HEK293 (cell line): ENCODE measurements at regions of chr12 and their contacts with region 1.

Region 1: GRCh38 chr12:103548622-103549601 is 38.2 kb upstream of the STAB2 start:
- H3K4me3 ChIP-seq: no peak overlapping the region
- H3K27ac ChIP-seq: no peak overlapping the region
- H3K4me1 ChIP-seq: no peaks in the 10 kb centered on the region
- CTCF ChIP-seq: peak; percentile 62

Region 2: DNA sequence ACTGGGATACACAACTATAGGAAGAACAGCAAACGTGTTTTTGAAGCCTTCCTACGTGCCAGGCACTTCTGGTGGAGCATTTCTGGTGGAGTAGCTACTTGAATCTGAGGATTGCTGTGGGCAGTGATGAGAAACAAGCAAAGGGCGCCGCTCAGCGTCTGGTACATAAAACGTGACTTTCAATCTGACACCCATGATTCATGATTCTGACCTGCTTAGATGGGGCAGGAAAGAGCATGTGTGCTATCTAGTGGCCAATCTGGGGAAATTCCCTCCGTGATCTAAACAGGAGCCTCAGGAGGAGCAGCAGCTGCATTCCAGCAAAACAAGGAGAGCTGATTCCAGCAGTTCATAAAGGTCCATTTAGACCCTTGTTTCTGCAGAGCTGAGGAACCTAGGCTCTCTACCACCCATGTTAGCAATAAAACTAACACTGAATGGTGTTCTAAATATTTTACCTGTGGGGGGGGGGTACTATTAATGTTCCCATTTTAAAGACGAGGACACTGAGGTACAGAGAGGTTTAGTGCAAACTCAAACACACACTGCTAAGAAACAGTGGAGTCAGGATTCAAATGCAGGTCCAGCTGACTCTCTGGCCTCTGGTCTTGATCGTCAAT is 669.7 kb before region 1 on chr12:
- CTCF ChIA-PET with region 1: interaction called, 70 read pairs
- POLR2A ChIA-PET with region 1: no interaction called
- H3K4me3 ChIP-seq: no peak overlapping the region
- H3K27ac ChIP-seq: no peak overlapping the region
- H3K4me1 ChIP-seq: no peaks in the 10 kb centered on the region
- CTCF ChIP-seq: peak; percentile 17; the same call in 1 of the 2 replicates

Region 3: DNA sequence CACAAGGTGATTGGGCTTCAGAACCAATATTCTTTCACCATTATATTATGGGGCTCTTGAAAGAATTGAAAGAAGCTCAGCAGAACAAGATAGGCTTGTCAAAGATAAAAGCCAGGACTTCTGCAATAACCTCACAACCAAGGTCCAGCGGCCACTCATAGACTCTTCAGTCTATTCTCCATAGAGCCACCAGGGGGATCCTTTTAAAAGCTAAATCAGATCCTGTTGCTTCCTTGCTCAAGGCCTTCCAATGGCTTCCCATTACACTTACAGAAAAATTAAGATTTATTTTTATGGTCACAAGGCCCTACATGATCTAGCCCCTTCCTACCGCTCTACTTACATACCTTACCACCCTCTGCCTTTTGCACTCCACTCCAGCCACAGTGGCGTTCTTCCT is 222.7 kb before region 1 on chr12:
- CTCF ChIA-PET with region 1: interaction called, 12 read pairs
- POLR2A ChIA-PET with region 1: no interaction called
- H3K4me3 ChIP-seq: no peak overlapping the region
- H3K27ac ChIP-seq: no peak overlapping the region
- H3K4me1 ChIP-seq: no peaks in the 10 kb centered on the region
- CTCF ChIP-seq: no peak

Region 4: GRCh38 chr12:103503977-103504376 is 44.9 kb before region 1 on chr12:
- CTCF ChIA-PET with region 1: interaction called, 21 read pairs
- POLR2A ChIA-PET with region 1: no interaction called
- H3K4me3 ChIP-seq: no peak overlapping the region
- H3K27ac ChIP-seq: no peak overlapping the region
- H3K4me1 ChIP-seq: no peaks in the 10 kb centered on the region
- CTCF ChIP-seq: no peak

Region 5: GRCh38 chr12:103530307-103531066 is 18.4 kb before region 1 on chr12:
- CTCF ChIA-PET with region 1: interaction called, 14 read pairs
- POLR2A ChIA-PET with region 1: no interaction called
- H3K4me3 ChIP-seq: no peak overlapping the region
- H3K27ac ChIP-seq: no peak overlapping the region
- H3K4me1 ChIP-seq: no peaks in the 10 kb centered on the region
- CTCF ChIP-seq: no peak

Region 6: GRCh38 chr12:103632554-103633216 is 83.8 kb after region 1 on chr12:
- CTCF ChIA-PET with region 1: interaction called, 17 read pairs
- POLR2A ChIA-PET with region 1: no interaction called
- H3K4me3 ChIP-seq: no peak overlapping the region
- H3K27ac ChIP-seq: no peak overlapping the region
- H3K4me1 ChIP-seq: no peaks in the 10 kb centered on the region
- CTCF ChIP-seq: peak; percentile 55; the same call in 1 of the 2 replicates

Region 7: DNA sequence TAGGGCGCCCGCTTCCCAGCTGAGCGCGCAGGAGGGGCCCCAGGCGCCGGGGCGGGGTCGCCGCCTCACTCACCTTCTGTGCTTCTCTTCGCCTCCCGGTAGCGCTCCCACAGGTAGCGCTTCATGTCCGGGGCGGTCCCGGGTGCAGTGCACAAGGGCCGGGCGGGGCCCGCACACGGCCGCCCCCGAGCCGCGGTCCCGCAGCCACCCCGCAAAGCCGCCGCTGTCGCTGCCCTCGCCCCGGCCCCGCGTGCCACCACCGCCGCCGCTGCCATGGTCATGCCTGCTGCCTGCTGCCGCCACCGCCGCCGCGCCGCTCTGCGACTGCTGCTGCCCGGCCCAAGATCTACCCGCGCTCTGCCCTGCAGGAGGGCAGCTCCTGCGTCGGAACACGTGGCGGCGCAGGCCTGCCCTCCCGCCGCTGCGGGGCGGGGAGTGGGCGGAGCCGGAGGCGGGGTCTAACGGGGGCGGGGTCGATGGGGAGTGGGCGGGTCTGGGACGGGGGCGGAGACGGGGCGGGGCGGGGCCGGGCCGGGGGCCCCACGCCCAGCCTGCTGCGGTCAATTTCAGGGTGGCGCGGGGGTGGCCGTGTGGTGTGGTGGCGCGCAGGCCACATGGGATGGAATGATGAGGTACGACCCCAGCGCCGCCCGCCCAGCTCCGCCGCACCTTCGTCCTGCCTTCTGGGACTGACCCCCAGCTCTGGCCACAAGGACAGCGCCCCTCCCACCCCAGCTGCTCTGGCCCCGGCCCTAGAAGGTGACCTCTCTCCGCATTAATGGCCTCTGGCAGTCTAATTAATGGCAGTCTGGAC is 292.2 kb after region 1 on chr12 and contains the start of gene NT5DC3:
- CTCF ChIA-PET with region 1: no interaction called
- POLR2A ChIA-PET with region 1: no interaction called
- H3K4me3 ChIP-seq: peak within 1 kb of the TSS; percentile 70
- H3K27ac ChIP-seq: peak within 1 kb of the TSS; percentile 61; the same call in 1 of the 2 replicates
- H3K4me1 ChIP-seq: peaks cover 3% of the 10 kb centered on the region; the same call in 1 of the 2 replicates
- CTCF ChIP-seq: no peak

Region 8: GRCh38 chr12:103997286-103997900 is 448.5 kb after region 1 on chr12:
- CTCF ChIA-PET with region 1: no interaction called
- POLR2A ChIA-PET with region 1: no interaction called
- H3K4me3 ChIP-seq: no peak overlapping the region
- H3K27ac ChIP-seq: no peak overlapping the region
- H3K4me1 ChIP-seq: no peaks in the 10 kb centered on the region
- CTCF ChIP-seq: no peak